ENCODE measurements at regions of chr16 and their contacts with region 1.

Region 1: DNA sequence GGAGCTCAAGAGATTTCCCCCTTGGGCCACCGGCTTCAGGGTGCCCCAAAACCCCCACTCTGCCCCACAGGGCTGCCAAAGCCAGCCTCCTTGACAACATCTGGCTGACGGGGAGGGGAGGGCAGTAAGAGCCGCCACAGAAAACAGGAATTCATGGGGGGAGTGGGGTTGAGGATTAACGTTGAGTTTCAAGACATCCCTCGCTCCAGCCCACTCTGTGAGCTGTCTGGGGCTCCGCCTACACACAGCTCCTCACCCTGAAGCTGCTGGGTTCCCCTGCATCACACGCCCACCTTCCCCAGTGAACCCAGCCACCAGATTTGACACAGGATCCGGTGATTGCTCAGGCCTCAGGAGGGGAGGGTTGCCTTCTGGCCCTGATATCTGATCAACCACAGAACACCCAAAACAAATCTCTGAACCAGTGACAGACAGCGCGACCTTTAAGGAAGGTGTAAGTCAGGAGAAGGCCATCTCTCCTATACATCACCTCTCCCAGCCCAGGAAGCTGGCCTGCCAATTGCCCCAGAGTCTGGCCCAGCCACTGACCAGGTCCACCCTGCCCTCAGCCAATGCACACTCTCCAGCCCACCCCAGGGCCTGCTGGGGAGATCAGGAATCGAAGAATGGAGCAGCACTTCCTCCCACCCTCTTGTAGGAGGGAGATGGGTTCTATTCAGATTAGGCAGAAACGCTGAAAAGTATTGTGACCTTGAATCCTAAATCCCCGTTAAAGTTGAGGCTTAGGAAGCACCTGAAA is 132.1 kb downstream of the CLEC16A start:
- DNase-seq: no peak
- ATAC-seq: peak; percentile 70
- H3K4me3 Mint-ChIP-seq: peak overlapping the region; percentile 51
- H3K27ac Mint-ChIP-seq: peak overlapping the region; percentile 95
- H3K4me1 Mint-ChIP-seq: peaks cover 83% of the 10 kb centered on the region
- H3K27me3 Mint-ChIP-seq: no peaks in the 10 kb centered on the region
- CTCF ChIP-seq: no peak

Region 2: GRCh38 chr16:10981697-10982216 is 94.7 kb before region 1 on chr16:
- CTCF ChIA-PET with region 1: no interaction called
- POLR2A ChIA-PET with region 1: interaction called, 11 read pairs
- intact Hi-C with region 1: loop called (anchors 2 kb)
- DNase-seq: peak; percentile 64
- ATAC-seq: peak; percentile 88
- H3K4me3 Mint-ChIP-seq: peak overlapping the region; percentile 69
- H3K27ac Mint-ChIP-seq: peak overlapping the region; percentile 84
- H3K4me1 Mint-ChIP-seq: peaks cover 49% of the 10 kb centered on the region
- H3K27me3 Mint-ChIP-seq: no peaks in the 10 kb centered on the region
- CTCF ChIP-seq: no peak

Region 3: GRCh38 chr16:11088074-11088730 is 11.8 kb after region 1 on chr16:
- CTCF ChIA-PET with region 1: interaction called, 4 read pairs
- POLR2A ChIA-PET with region 1: interaction called, 82 read pairs
- intact Hi-C with region 1: no loop called
- DNase-seq: no peak
- ATAC-seq: no peak
- H3K4me3 Mint-ChIP-seq: no peak overlapping the region
- H3K27ac Mint-ChIP-seq: peak overlapping the region; percentile 63
- H3K4me1 Mint-ChIP-seq: peaks cover 44% of the 10 kb centered on the region
- H3K27me3 Mint-ChIP-seq: no peaks in the 10 kb centered on the region
- CTCF ChIP-seq: no peak

Region 4: GRCh38 chr16:11105038-11105903 is 28.8 kb after region 1 on chr16:
- CTCF ChIA-PET with region 1: interaction called, 6 read pairs
- POLR2A ChIA-PET with region 1: interaction called, 25 read pairs
- intact Hi-C with region 1: loop called (anchors 1 kb)
- DNase-seq: no peak
- ATAC-seq: peak; percentile 87
- H3K4me3 Mint-ChIP-seq: peak overlapping the region; percentile 72
- H3K27ac Mint-ChIP-seq: peak overlapping the region; percentile 92
- H3K4me1 Mint-ChIP-seq: peaks cover 45% of the 10 kb centered on the region
- H3K27me3 Mint-ChIP-seq: no peaks in the 10 kb centered on the region
- CTCF ChIP-seq: no peak

Region 5: DNA sequence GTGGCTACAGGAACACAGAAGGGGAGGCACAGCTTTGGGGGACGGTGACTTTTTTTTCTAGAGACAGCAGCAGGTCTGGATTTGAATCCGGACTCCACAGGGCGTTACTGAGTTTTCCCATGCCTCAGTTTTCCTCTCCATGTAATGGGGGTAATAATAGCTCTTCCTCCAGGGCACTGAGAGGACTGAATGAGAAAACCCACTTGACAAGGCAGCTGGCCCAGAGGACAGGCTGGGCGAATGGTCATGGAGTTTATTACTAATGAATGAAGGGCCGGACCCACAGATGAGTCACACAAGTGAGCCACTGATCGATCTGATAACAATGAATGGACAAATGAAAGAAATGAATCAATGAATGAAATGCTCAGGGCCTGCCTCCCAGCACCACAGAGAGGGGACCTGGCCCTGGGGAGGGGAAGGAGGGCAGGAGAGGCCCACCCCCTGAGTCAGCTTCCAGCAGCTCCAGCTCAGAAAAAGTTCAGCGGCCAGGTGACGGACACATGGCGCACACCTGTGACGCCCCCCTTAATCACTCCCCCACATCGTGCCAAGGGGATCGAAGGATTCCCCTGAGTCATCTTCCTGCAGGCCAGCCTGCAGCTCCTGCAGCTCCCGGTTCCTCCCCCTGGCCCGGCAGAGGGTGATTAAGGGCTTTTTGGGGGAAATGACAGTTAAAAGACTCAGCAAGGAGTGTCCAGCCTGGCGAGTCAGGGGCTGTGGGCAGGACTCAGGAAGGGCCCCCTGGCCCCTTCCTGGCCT is 125.2 kb after region 1 on chr16:
- CTCF ChIA-PET with region 1: no interaction called
- POLR2A ChIA-PET with region 1: interaction called, 12 read pairs
- intact Hi-C with region 1: no loop called
- DNase-seq: no peak
- ATAC-seq: no peak
- H3K4me3 Mint-ChIP-seq: no peak overlapping the region
- H3K27ac Mint-ChIP-seq: peak overlapping the region; percentile 26
- H3K4me1 Mint-ChIP-seq: peaks cover 52% of the 10 kb centered on the region
- H3K27me3 Mint-ChIP-seq: peaks cover 7% of the 10 kb centered on the region
- CTCF ChIP-seq: no peak

Region 6: GRCh38 chr16:11297492-11298142 is 221.2 kb after region 1 on chr16:
- CTCF ChIA-PET with region 1: no interaction called
- POLR2A ChIA-PET with region 1: interaction called, 8 read pairs
- intact Hi-C with region 1: loop called (anchors 5 kb)
- DNase-seq: peak; percentile 85
- ATAC-seq: peak; percentile 97
- H3K4me3 Mint-ChIP-seq: peak overlapping the region; percentile 73
- H3K27ac Mint-ChIP-seq: peak overlapping the region; percentile 85
- H3K4me1 Mint-ChIP-seq: peaks cover 72% of the 10 kb centered on the region
- H3K27me3 Mint-ChIP-seq: no peaks in the 10 kb centered on the region
- CTCF ChIP-seq: no peak

Measured in activated B cell treated with CpG ODN at 0.5 μM for 24 hours (primary cell).